ENCODE measurements at regions of chr16 and their contacts with region 1.

Region 1: DNA sequence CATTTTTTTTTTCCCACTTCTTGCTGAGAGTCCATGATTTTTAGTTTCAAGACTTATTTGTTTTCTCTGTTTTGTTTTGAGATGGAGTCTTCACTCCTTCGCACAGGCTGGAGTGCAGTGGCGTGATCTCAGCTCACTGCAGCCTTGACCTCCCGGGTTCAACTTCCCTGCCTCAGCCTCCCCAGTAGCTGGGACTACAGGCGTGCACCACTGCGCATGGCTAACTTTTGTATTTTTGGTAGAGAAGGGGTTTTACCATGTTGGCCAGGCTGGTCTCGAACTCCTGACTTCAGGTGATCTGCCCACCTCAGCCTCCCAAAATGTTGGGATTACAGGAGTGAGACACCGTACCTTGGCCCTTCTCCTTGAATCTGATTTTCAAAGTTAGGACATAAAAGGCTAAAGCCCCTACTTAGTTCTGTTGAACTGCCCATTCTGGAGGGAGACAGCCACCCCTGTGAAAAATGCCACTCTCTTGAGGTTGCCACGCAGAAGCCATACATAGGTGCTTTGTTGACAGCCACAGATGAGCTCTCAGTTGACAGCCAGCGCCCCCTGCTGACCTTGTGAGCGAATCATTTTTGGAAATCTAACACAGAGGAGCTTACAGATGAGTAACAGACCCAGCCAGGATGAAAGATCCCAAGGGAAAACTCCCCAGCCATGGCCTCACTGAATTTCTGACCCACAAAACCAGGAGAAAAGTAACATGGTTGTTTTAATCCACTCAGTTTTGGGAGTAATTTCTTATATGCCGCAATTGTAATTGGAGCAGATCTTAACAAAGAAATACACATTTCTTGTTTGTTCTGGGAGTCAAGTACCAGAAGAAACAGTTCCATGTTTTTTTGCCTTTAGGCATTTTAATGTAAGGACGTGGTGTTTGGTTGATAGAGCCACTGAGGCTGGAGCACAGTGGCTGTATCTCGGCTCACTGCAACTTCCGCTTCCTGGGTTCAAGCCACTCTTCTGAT is 38.8 kb downstream of the PKD1L3 start:
- DNase-seq: peak; percentile 67 to 87 (median 70)
- ATAC-seq: peak; percentile 96
- H3K4me3 ChIP-seq: no peak overlapping the region
- H3K27ac ChIP-seq: no peak overlapping the region
- H3K4me1 ChIP-seq: no peaks in the 10 kb centered on the region
- H3K27me3 ChIP-seq: peaks cover 0 to 7% of the 10 kb centered on the region in 2 experiments; a peak in 2 of 5 replicates
- CTCF ChIP-seq: peak; percentile 84 to 90 (median 89)
- EP300 ChIP-seq: no peak
- POLR2A ChIP-seq: no peak
- RAD21 ChIP-seq: peak; percentile 78 to 92

Region 2: DNA sequence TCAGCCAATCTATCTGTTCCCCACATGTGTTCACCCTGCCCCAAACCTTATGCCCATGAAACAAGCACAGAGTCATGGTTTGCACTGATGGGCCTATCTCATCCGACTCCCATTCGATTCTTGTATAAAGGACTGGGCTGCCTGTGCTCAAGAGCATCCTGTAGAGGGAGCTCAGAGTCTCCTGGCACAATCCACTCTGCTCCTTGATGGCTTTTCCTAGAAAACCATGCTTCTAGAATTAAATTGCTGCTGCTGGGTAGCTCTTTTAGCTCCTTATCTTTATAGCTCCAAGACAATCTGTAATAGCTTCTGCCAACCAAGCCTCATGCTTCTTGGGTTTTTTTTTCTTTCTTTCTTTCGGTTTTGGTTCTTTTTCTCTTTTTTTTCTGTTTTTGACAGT is 481.9 kb before region 1 on chr16:
- CTCF ChIA-PET with region 1: no interaction called
- POLR2A ChIA-PET with region 1: no interaction called
- in situ Hi-C with region 1: no loop called
- intact Hi-C with region 1: no loop called
- DNase-seq: peak; percentile 16 to 67 (median 42)
- ATAC-seq: peak; percentile 92
- H3K4me3 ChIP-seq: no peak overlapping the region
- H3K27ac ChIP-seq: no peak overlapping the region
- H3K4me1 ChIP-seq: peaks cover 2 to 4% of the 10 kb centered on the region in 2 experiments; a peak in 3 of 5 replicates
- H3K27me3 ChIP-seq: no peaks in the 10 kb centered on the region
- CTCF ChIP-seq: peak; percentile 70 to 85 (median 71)
- EP300 ChIP-seq: no peak
- POLR2A ChIP-seq: no peak
- RAD21 ChIP-seq: peak; percentile 58 to 71

Region 3: DNA sequence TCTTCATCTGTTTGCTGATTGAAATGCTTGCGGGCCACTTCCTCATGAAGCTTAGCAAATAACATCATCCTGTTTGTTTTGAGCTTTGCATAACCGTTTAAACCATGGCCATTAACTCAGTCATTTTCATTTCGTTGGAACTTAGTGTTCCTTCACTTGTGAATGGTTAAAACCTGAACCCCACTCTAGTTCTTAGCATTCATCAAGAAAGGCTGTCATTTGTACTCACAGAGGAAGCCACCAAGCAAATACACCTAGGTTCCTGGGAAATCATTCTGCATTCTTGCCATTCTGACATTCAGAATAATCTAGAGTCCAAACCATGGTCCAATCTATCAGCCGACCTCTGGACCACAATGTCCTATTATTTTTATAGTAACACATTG is 376.0 kb before region 1 on chr16:
- CTCF ChIA-PET with region 1: no interaction called
- POLR2A ChIA-PET with region 1: no interaction called
- in situ Hi-C with region 1: no loop called
- intact Hi-C with region 1: no loop called
- DNase-seq: no peak
- ATAC-seq: no peak
- H3K4me3 ChIP-seq: no peak overlapping the region
- H3K27ac ChIP-seq: no peak overlapping the region
- H3K4me1 ChIP-seq: no peaks in the 10 kb centered on the region
- H3K27me3 ChIP-seq: peaks cover 35 to 45% of the 10 kb centered on the region in 2 experiments
- CTCF ChIP-seq: no peak
- EP300 ChIP-seq: no peak
- POLR2A ChIP-seq: no peak
- RAD21 ChIP-seq: no peak

Region 4: DNA sequence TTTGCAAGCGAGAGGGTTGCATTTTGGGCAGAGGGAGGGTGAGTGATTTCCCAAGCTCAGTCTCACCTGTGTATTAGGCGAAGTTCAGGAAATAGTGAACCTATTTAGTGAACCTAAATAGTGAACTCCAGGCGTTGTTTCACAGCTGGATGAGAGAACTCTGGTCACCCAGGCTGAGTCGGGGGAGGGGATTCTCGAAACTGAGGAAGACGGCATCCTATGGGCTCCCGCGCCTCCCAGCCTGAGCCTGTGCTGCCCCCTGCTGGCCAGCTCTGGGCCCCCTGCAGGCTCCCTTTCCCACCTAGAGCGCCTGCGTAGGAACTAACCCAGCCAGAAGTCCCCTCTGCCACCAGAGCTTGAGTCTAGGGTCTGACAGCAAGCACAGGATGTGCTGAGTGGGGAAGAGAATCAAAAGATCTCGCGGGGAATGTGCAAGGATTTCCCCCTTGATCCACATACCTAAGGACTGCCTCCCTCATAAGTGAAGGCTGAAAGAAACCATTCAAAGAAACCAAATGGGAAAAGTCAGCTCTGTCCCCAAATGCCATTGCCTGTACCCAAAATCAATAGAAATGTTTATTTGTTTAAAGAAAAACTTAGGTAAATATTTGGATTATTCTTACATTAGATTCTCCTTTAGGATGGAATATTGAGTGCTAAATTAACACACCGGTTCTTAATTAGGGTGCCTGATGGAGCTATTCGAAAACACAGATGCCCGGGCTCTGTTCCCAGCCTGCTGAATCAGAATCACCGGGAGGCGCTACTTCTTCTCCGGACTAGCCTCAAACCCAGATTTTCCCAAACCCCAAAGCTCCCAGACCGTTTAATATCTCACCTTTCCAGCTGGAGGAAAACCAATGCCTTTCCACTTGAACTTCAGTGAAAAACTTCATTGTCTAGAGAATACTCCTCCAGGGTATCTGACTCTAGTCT is 350.1 kb before region 1 on chr16:
- CTCF ChIA-PET with region 1: interaction called, 3 read pairs
- POLR2A ChIA-PET with region 1: no interaction called
- in situ Hi-C with region 1: no loop called
- intact Hi-C with region 1: loop called (anchors 10 kb)
- DNase-seq: peak; percentile 80 to 91 (median 87)
- ATAC-seq: peak; percentile 99
- H3K4me3 ChIP-seq: no peak overlapping the region
- H3K27ac ChIP-seq: no peak overlapping the region
- H3K4me1 ChIP-seq: peaks cover 0 to 3% of the 10 kb centered on the region in 2 experiments; a peak in 1 of 5 replicates
- H3K27me3 ChIP-seq: peaks cover 3 to 17% of the 10 kb centered on the region in 2 experiments; a peak in 3 of 5 replicates
- CTCF ChIP-seq: peak; percentile 90 to 97 (median 95)
- EP300 ChIP-seq: no peak
- POLR2A ChIP-seq: no peak
- RAD21 ChIP-seq: peak; percentile 77 to 87

Region 5: GRCh38 chr16:71746442-71747046 is 214.8 kb before region 1 on chr16:
- CTCF ChIA-PET with region 1: no interaction called
- POLR2A ChIA-PET with region 1: no interaction called
- in situ Hi-C with region 1: no loop called
- intact Hi-C with region 1: loop called (anchors 10 kb)
- DNase-seq: peak; percentile 42 to 56 (median 48)
- ATAC-seq: peak; percentile 73
- H3K4me3 ChIP-seq: no peak overlapping the region
- H3K27ac ChIP-seq: no peak overlapping the region
- H3K4me1 ChIP-seq: no peaks in the 10 kb centered on the region
- H3K27me3 ChIP-seq: no peaks in the 10 kb centered on the region
- CTCF ChIP-seq: peak; percentile 50 to 78 (median 71); a peak in 5 of 6 replicates
- EP300 ChIP-seq: no peak
- POLR2A ChIP-seq: no peak
- RAD21 ChIP-seq: peak; percentile 33 to 73; a peak in 2 of 4 replicates

Region 6: GRCh38 chr16:71883849-71884638 is 77.3 kb before region 1 on chr16 and contains the start of gene ZNF821:
- CTCF ChIA-PET with region 1: interaction called, 3 read pairs
- POLR2A ChIA-PET with region 1: no interaction called
- in situ Hi-C with region 1: no loop called
- intact Hi-C with region 1: loop called (anchors 2 kb)
- DNase-seq: peak; percentile 88 to 98 (median 96)
- ATAC-seq: peak; percentile 80
- H3K4me3 ChIP-seq: peak within 1 kb of the TSS; percentile 95
- H3K27ac ChIP-seq: peak within 1 kb of the TSS; percentile 80
- H3K4me1 ChIP-seq: peaks cover 13 to 26% of the 10 kb centered on the region in 2 experiments; a peak in 4 of 5 replicates
- H3K27me3 ChIP-seq: no peaks in the 10 kb centered on the region
- CTCF ChIP-seq: peak in 1 of 3 experiments; percentile 55; a peak in 3 of 6 replicates
- EP300 ChIP-seq: no peak
- POLR2A ChIP-seq: peak; percentile 63
- RAD21 ChIP-seq: peak; percentile 25 to 54
- polyA plus RNA-seq, gene ZNF821: 0.38 to 0.51 TPM

Region 7: GRCh38 chr16:71916397-71916920 is 44.9 kb before region 1 on chr16:
- CTCF ChIA-PET with region 1: no interaction called
- POLR2A ChIA-PET with region 1: no interaction called
- in situ Hi-C with region 1: no loop called
- intact Hi-C with region 1: no loop called
- DNase-seq: no peak
- ATAC-seq: no peak
- H3K4me3 ChIP-seq: no peak overlapping the region
- H3K27ac ChIP-seq: no peak overlapping the region
- H3K4me1 ChIP-seq: no peaks in the 10 kb centered on the region
- H3K27me3 ChIP-seq: no peaks in the 10 kb centered on the region
- CTCF ChIP-seq: no peak
- EP300 ChIP-seq: no peak
- POLR2A ChIP-seq: no peak
- RAD21 ChIP-seq: no peak

Region 8: DNA sequence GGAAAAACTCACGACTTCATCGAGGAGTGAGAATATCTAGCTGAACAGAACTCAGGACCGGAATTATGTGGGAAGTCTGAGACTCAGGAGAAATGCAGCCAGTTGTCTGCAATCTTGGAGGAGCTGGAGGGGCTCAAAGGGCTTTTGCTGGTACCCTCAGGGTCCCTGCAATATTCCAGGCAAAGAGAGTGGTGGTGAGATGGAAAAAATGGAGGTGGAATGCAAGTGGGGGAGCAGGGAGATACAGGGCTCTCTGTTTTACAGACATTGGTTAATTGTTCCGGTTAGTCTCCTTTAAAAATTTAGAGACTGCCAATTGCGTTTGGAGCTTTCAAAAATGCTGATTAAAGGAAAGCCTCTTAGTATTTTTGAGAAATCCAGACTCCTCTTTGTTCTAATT is 74.7 kb after region 1 on chr16:
- CTCF ChIA-PET with region 1: no interaction called
- POLR2A ChIA-PET with region 1: no interaction called
- in situ Hi-C with region 1: no loop called
- intact Hi-C with region 1: no loop called
- DNase-seq: no peak
- ATAC-seq: peak; percentile 45; the same call in 1 of the 3 replicates
- H3K4me3 ChIP-seq: no peak overlapping the region
- H3K27ac ChIP-seq: no peak overlapping the region
- H3K4me1 ChIP-seq: no peaks in the 10 kb centered on the region; a peak in 1 of 5 replicates
- H3K27me3 ChIP-seq: no peaks in the 10 kb centered on the region; a peak in 1 of 5 replicates
- CTCF ChIP-seq: no peak
- EP300 ChIP-seq: no peak
- POLR2A ChIP-seq: no peak
- RAD21 ChIP-seq: no peak

Measured in K562 (cell line).